Activated naive CD4-positive, alpha-beta T cell treated with anti-CD3 and anti-CD28 coated beads, Interleukin-2, amount 10 ng/mL, durations not matched to agents 7 days and 5 days (primary cell): ENCODE measurements at regions of chr12 and their contacts with region 1.

Region 1: DNA sequence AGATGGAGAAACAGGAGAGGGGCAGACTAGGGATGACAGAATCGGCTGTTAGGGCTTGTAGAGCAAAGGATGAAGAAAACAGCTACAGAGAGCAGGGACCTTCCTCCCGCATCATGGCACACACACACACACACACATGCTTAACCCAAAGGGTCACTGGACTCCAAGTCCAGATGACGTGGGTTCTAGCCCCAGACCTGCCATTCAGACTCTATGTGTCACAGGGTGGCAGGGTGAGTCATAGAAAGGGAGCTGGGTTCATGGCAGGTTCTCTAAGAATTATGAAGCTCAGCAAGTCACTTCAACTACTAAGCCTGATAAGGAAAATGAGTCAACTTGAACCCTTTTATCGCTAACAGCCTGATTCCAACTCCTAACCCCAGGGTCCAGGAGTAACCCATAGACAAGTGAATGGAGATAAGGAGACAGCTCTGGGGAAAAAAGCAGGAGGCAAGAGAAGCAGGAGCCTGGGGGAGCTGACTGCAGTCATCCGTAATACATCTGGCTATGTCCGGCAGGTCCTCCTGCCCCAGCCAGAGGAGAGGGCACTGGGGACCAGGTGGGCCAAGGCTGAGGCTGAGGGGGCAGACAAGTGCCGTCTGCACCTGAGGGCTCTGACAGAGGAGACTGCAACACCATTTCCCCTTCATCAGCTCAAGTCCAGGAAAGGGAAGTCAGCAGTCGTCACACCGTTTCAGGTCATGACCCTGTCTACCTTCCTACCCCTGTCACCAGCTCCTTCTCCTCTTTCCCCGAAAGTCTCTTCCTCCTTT is 3.6 kb upstream of the TNFRSF1A start:
- DNase-seq: no peak
- H3K4me3 Mint-ChIP-seq: peak overlapping the region; percentile 36
- H3K27ac Mint-ChIP-seq: peak overlapping the region; percentile 82
- H3K4me1 Mint-ChIP-seq: peaks cover 58% of the 10 kb centered on the region
- H3K27me3 Mint-ChIP-seq: no peaks in the 10 kb centered on the region

Region 2: GRCh38 chr12:6182116-6182898 is 163.2 kb before region 1 on chr12:
- CTCF ChIA-PET with region 1: no interaction called
- DNase-seq: no peak
- H3K4me3 Mint-ChIP-seq: no peak overlapping the region
- H3K27ac Mint-ChIP-seq: no peak overlapping the region
- H3K4me1 Mint-ChIP-seq: no peaks in the 10 kb centered on the region
- H3K27me3 Mint-ChIP-seq: peaks cover 18% of the 10 kb centered on the region

Region 3: DNA sequence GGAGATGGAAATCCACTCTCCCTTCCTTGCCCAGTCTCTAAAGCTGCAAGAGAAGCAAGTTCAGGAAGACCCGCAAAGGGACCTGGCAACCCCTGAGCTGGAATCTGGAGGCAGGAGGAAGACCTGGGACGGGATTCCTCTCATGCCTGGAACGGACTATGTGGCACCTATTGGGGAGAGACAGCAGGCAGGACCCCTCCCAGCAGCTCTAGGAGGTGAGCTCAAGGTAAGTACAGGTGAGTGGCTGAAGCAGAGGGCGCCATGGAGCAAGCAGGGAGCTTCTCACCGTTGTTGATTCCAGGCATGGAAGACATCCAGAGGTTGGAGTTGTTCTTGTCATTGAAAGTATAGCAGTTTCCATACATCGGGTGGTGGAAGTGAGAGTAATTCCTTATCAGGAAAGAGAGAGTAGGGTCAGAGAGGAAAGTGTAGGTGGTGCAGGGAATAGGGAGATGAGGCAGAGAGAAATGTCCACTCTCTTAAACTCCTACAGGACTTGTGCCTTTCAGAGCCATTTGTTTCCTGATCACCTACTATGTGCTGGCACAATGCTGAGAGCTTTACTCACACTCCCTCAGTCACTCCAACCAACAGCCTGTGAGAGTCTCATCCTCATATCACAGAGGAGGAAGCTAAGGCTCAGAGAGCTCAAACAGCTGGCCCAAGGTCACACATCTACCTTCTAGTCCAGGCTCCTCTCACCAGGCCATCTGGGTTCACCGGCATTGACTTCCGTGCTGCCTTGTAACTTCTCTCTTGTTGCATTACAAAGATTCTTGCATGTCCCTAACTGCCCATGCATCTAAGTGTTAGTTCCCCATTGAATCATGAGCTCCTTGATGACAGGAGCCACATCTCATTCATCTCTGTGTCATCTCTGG is 10.2 kb after region 1 on chr12:
- CTCF ChIA-PET with region 1: interaction called, 10 read pairs
- DNase-seq: no peak
- H3K4me3 Mint-ChIP-seq: no peak overlapping the region
- H3K27ac Mint-ChIP-seq: no peak overlapping the region
- H3K4me1 Mint-ChIP-seq: peaks cover 5% of the 10 kb centered on the region
- H3K27me3 Mint-ChIP-seq: peaks cover 59% of the 10 kb centered on the region

Region 4: DNA sequence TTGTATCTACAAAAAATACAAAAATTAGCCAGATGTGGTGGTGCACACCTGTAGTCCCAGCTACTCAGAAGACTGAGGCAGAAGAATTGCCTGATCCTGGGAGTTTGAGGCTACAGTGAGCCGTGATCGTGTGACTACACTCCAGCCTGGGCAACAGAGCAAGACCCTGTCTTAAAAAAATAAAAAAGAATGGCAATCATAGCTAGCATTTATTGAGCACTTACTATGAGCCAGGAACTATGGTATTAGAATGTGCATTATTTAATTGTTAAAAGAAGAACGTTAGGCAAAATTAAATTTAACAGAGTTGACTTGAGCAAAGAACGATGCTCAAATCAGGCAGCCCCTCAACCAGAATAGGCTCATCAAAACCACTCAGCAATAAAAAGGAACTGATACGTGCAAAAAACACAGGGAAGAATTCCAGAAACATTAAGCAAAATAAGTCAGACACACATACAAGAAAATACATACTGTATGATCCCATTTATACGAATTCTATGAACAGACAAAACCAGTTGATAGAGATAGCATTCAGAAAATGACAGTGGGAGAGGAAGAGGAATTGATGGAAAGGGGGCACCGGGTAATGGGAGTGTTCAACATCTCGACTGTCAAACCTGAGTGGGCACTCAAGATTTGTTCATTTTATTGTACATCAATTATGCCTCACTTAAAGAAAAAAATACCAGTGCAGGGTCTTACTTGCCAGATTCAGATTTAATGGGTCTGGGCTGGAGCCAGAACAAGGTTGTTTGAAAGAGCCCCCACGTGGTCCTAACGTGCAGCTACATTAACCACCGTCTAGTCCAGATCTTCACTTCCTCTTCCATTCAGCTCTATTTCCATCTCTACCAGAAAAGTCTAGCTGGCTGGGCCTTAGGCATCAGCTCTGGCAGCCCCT is 21.8 kb after region 1 on chr12:
- CTCF ChIA-PET with region 1: interaction called, 13 read pairs
- DNase-seq: peak; percentile 56
- H3K4me3 Mint-ChIP-seq: no peak overlapping the region
- H3K27ac Mint-ChIP-seq: peak overlapping the region; percentile 58
- H3K4me1 Mint-ChIP-seq: peaks cover 58% of the 10 kb centered on the region
- H3K27me3 Mint-ChIP-seq: peaks cover 13% of the 10 kb centered on the region